Panc1 (cell line): ENCODE measurements at regions of chr14 and their contacts with region 1.

Region 1: GRCh38 chr14:106776395-106776983 is 1250.1 kb downstream of the TMEM121 start:
- DNase-seq: no peak
- ATAC-seq: no peak
- H3K4me3 ChIP-seq: no peak overlapping the region
- H3K27ac ChIP-seq: no peak overlapping the region
- H3K4me1 ChIP-seq: no peaks in the 10 kb centered on the region
- H3K27me3 ChIP-seq: no peaks in the 10 kb centered on the region
- CTCF ChIP-seq: no peak

Region 2: DNA sequence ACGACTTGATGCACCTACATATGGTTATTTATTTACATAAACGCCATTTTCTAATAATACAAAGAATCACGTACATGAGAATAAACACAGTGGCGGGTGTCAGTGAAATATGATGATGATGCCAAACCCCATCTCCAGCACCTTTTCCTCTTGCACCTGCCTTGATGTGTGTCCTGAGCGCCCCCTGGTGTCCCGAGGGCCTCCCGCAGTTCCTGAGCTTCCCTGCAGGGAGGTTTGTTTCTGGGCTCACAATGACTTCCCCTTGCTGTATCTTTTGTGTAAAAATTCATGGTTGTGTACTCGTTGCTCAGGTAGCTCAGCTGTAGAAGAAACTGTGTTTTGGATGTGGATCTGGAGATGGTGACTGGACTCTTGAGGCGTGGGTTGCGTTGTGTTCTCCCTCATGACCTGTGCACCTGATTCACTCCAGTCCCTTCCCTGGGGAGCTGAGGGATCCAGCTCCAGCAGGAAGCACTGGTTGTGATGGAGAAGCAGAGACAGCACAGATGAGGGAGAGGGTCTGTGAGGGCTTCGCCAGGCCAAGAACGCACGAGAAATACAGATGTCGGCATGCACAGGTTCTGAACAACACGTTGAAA is 212.3 kb before region 1 on chr14:
- CTCF ChIA-PET with region 1: interaction called, 20 read pairs
- POLR2A ChIA-PET with region 1: no interaction called
- in situ Hi-C with region 1: no loop called
- intact Hi-C with region 1: no loop called
- DNase-seq: peak; percentile 18
- ATAC-seq: no peak
- H3K4me3 ChIP-seq: no peak overlapping the region
- H3K27ac ChIP-seq: no peak overlapping the region
- H3K4me1 ChIP-seq: no peaks in the 10 kb centered on the region
- H3K27me3 ChIP-seq: peaks cover 2% of the 10 kb centered on the region; the same call in 1 of the 2 replicates
- CTCF ChIP-seq: peak; percentile 82